Activated CD8-positive, alpha-beta T cell treated with anti-CD3 and anti-CD28 coated beads for 36 hours (primary cell): ENCODE measurements at regions of chr10 and their contacts with region 1.

Region 1: DNA sequence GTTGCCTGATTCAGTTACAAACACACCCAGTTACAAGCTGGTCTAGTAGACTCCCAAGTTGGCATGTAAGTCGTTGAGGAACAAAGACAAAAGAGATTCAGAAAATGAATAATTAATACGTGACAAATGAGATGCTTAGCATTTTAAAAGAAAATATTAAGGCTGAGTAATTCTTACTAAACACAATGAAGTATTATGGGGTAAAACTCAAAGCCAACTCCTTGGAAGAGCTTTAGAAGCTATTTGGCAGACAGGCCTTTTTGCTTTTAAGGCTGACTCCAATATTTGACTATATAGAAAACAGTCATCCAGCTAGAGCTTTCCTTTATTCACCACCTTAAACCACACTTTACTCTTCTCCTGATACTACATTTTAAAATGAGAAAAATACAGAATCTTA is 5.4 kb downstream of the TRDMT1 start:
- DNase-seq: no peak
- ATAC-seq: no peak
- H3K4me3 Mint-ChIP-seq: no peak overlapping the region
- H3K27ac Mint-ChIP-seq: no peak overlapping the region
- H3K4me1 Mint-ChIP-seq: peaks cover 18% of the 10 kb centered on the region
- H3K27me3 Mint-ChIP-seq: no peaks in the 10 kb centered on the region
- CTCF ChIP-seq: no peak

Region 2: GRCh38 chr10:17181758-17182157 is 14.3 kb before region 1 on chr10:
- CTCF ChIA-PET with region 1: interaction called, 11 read pairs
- POLR2A ChIA-PET with region 1: interaction called, 3 read pairs
- intact Hi-C with region 1: no loop called
- DNase-seq: no peak
- ATAC-seq: no peak
- H3K4me3 Mint-ChIP-seq: no peak overlapping the region
- H3K27ac Mint-ChIP-seq: no peak overlapping the region
- H3K4me1 Mint-ChIP-seq: peaks cover 4% of the 10 kb centered on the region
- H3K27me3 Mint-ChIP-seq: no peaks in the 10 kb centered on the region
- CTCF ChIP-seq: no peak